ENCODE measurements at regions of chr12 and their contacts with region 1.

Region 1: GRCh38 chr12:47773062-47773857 is at the start of gene SLC48A1:
- DNase-seq: peak; percentile 79
- H3K4me3 Mint-ChIP-seq: peak within 1 kb of the TSS; percentile 90
- H3K27ac Mint-ChIP-seq: peak within 1 kb of the TSS; percentile 13
- H3K4me1 Mint-ChIP-seq: peaks cover 28% of the 10 kb centered on the region
- H3K27me3 Mint-ChIP-seq: no peaks in the 10 kb centered on the region
- total RNA-seq, gene SLC48A1: 16.6 to 21.0 TPM

Region 2: DNA sequence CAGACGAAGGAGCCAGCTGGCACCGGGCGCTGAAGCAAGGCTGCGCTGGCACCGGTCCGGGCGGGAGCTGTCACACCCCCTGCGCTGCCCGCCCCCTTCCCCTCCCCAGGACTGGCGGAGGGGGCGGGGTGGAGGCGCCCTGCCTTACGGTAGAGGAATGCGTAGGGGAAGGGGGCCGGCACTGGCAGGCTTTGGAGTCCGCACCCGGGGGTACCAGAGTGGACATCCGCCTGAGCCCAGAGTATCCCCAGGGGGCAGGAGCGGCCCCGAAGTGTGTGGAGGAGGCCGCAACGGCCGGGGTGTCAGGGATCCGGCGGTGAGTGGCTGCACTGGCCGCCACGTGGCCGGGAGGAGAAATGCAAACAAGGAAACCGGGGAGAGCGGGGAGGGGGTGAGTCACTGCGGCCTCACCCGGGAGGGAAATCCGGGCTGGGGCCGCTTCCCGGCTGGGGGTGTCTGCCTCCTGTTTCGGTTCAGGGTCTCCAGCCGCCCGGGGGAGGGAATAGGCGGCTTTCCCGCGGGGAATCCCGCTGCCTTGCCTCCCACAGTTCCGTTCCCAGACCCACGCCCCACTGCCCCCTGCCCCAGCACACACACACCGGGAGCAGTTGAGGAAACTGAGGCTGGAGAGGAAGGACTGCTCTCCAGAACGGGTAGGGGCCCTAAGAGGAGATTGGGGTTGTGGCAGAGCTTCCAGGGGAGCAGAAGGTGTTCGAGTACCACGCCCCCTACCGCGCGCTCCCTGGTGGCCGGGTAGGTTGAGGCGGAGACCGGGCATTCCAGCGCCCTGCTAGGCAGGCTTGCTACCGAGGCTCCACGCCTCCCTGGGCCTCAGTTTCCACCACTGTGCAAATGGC is 14.2 kb before region 1 on chr12 and contains the start of gene RAPGEF3:
- CTCF ChIA-PET with region 1: interaction called, 112 read pairs
- intact Hi-C with region 1: no loop called
- DNase-seq: peak; percentile 86
- H3K4me3 Mint-ChIP-seq: peak within 1 kb of the TSS; percentile 65
- H3K27ac Mint-ChIP-seq: no peak within 1 kb of the TSS
- H3K4me1 Mint-ChIP-seq: peaks cover 24% of the 10 kb centered on the region
- H3K27me3 Mint-ChIP-seq: no peaks in the 10 kb centered on the region
- total RNA-seq, gene RAPGEF3: 1.5 to 1.6 TPM

Region 3: DNA sequence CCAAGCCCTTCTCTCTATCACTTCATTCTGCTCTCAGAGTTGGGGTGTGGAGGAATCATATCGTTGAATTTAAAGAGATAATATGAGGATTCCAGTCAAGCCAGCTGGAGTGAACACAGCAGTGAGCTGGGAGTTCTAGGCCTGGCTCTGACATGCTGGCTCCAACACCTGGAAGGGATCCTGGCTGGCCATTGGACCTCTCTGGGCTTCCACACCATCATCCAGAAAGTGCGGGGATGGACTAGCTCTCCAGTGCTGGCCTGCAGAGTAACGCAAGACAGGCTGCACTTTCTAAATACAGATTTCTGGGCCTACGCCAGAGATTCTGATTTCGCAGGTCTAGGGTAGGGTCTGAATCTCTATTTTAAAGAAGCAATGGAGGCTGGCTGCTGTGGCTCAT is 81.3 kb after region 1 on chr12:
- CTCF ChIA-PET with region 1: no interaction called
- intact Hi-C with region 1: no loop called
- DNase-seq: no peak
- H3K4me3 Mint-ChIP-seq: no peak overlapping the region
- H3K27ac Mint-ChIP-seq: no peak overlapping the region
- H3K4me1 Mint-ChIP-seq: peaks cover 15% of the 10 kb centered on the region
- H3K27me3 Mint-ChIP-seq: no peaks in the 10 kb centered on the region

Region 4: GRCh38 chr12:48350249-48351021 is 577.2 kb after region 1 on chr12 and contains the start of gene ZNF641:
- CTCF ChIA-PET with region 1: no interaction called
- intact Hi-C with region 1: no loop called
- DNase-seq: peak; percentile 79
- H3K4me3 Mint-ChIP-seq: peak within 1 kb of the TSS; percentile 91
- H3K27ac Mint-ChIP-seq: peak within 1 kb of the TSS; percentile 81
- H3K4me1 Mint-ChIP-seq: peaks cover 24% of the 10 kb centered on the region
- H3K27me3 Mint-ChIP-seq: no peaks in the 10 kb centered on the region
- total RNA-seq, gene ZNF641: 3.5 to 6.0 TPM

Measured in activated naive CD4-positive, alpha-beta T cell treated with anti-CD3 and anti-CD28 coated beads for 36 hours (primary cell).